MCF 10A (cell line): ENCODE measurements at regions of chr17 and their contacts with region 1.

Region 1: DNA sequence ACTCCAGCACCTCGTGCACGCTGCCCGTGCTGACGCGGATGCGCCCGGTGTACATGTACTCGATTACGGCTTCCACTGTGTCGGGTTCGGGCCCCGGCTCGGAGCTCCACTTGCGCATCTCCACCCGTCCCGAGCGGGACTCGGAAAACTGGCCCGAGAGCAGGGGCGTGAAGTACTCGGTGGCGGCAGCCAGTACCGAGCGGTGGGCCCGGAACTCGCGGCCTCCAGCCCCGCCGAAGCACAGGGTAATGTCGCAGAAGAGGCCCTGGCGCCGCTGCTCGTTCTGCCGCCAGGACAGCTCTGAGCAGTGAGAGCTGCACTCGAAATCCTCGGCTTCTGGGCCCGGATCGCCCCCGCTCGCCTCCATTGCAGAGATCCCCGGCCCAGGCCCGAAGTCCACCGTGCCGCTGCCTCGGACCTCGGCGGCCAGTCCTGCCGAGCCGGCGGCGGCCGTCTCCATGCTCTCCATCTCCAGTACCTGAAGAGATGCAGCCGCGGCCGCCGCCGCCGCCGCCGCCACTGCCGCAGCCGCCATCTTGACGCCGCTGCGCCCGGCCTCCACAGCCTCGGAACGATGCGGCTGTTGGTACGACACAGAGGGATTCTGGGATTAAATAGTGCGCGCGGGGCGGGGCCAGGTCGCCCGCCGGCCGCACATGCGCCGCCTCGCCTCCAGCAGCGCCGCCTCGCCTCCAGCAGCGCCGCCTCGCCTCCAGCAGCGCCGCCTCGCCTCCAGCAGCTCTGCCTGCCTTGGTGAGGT is at the start of gene KLHL11:
- DNase-seq: peak; percentile 89
- H3K4me3 Mint-ChIP-seq: no peak within 1 kb of the TSS
- H3K27ac Mint-ChIP-seq: no peak within 1 kb of the TSS
- H3K4me1 Mint-ChIP-seq: peaks cover 7% of the 10 kb centered on the region
- H3K27me3 Mint-ChIP-seq: no peaks in the 10 kb centered on the region
- CTCF ChIP-seq: no peak
- total RNA-seq, gene KLHL11: 19.1 and 22.3 TPM in 2 replicates

Region 2: GRCh38 chr17:41777574-41778188 is 87.3 kb before region 1 on chr17:
- CTCF ChIA-PET with region 1: no interaction called
- POLR2A ChIA-PET with region 1: interaction called, 13 read pairs
- intact Hi-C with region 1: no loop called
- DNase-seq: peak; percentile 92
- H3K4me3 Mint-ChIP-seq: no peak overlapping the region
- H3K27ac Mint-ChIP-seq: peak overlapping the region; percentile 71
- H3K4me1 Mint-ChIP-seq: peaks cover 33% of the 10 kb centered on the region
- H3K27me3 Mint-ChIP-seq: no peaks in the 10 kb centered on the region
- CTCF ChIP-seq: no peak

Region 3: GRCh38 chr17:41811549-41812380 is 53.3 kb before region 1 on chr17 and contains the start of gene P3H4:
- CTCF ChIA-PET with region 1: no interaction called
- POLR2A ChIA-PET with region 1: interaction called, 14 read pairs
- intact Hi-C with region 1: loop called (anchors 2 kb)
- DNase-seq: peak; percentile 74
- H3K4me3 Mint-ChIP-seq: peak within 1 kb of the TSS; percentile 95
- H3K27ac Mint-ChIP-seq: peak within 1 kb of the TSS; percentile 85
- H3K4me1 Mint-ChIP-seq: peaks cover 19% of the 10 kb centered on the region
- H3K27me3 Mint-ChIP-seq: no peaks in the 10 kb centered on the region
- CTCF ChIP-seq: peak; percentile 52
- total RNA-seq, gene P3H4: 36.4 and 41.5 TPM in 2 replicates

Region 4: GRCh38 chr17:41835800-41836549 is 29.0 kb before region 1 on chr17 and contains the start of gene NT5C3B:
- CTCF ChIA-PET with region 1: interaction called, 4 read pairs
- POLR2A ChIA-PET with region 1: interaction called, 26 read pairs
- intact Hi-C with region 1: no loop called
- DNase-seq: peak; percentile 32
- H3K4me3 Mint-ChIP-seq: peak within 1 kb of the TSS; percentile 75
- H3K27ac Mint-ChIP-seq: peak within 1 kb of the TSS; percentile 31
- H3K4me1 Mint-ChIP-seq: peaks cover 9% of the 10 kb centered on the region
- H3K27me3 Mint-ChIP-seq: no peaks in the 10 kb centered on the region
- CTCF ChIP-seq: no peak
- total RNA-seq, gene NT5C3B: 59.8 and 65.1 TPM in 2 replicates

Region 5: GRCh38 chr17:41848788-41849187 is 16.2 kb before region 1 on chr17:
- CTCF ChIA-PET with region 1: interaction called, 3 read pairs
- POLR2A ChIA-PET with region 1: interaction called, 35 read pairs
- intact Hi-C with region 1: no loop called
- DNase-seq: no peak
- H3K4me3 Mint-ChIP-seq: no peak overlapping the region
- H3K27ac Mint-ChIP-seq: no peak overlapping the region
- H3K4me1 Mint-ChIP-seq: no peaks in the 10 kb centered on the region
- H3K27me3 Mint-ChIP-seq: no peaks in the 10 kb centered on the region
- CTCF ChIP-seq: no peak

Region 6: DNA sequence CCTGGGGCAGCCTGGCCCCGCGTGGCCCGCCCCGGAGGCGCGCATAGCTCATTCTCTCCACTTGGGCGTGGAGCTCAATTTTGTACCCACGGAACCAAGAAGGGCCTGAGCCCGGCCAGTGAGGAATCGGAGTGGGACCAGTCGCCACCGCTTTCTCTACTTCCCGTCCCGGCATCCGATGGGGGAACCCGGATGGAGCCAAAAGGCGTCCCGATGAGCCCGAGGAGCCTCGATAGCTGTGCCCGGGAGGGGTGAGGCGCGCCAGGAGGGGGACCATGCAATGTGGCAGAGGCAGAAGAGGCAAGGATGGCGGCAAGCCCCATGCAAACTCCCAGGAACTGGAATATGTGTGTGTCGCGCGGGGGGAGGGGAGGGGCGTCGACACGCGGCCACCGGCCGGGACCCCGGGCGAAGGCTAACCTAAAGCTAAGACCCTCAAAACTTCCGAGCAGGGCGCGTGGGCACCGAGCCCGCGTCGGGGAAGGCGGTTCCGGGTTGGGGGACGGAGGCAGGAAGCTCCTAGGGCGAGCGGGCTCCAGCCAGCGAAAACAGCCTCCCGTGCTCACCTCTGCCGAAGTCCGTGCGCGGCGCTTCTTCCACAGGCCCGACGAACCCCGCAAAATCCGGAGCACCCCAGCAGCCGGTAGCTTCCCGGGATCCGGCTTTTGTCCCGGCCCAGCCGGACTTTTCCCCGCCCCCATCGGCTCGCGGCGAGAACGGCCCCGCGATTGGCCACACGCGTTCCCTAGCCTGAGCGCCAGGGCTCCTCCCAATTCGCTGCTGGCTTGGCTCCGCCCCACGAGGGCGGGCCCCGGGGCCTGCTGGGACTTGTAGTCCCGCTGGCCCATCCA is 53.5 kb after region 1 on chr17 and contains the start of gene ACLY:
- CTCF ChIA-PET with region 1: no interaction called
- POLR2A ChIA-PET with region 1: interaction called, 40 read pairs
- intact Hi-C with region 1: no loop called
- DNase-seq: peak; percentile 98
- H3K4me3 Mint-ChIP-seq: peak within 1 kb of the TSS; percentile 87
- H3K27ac Mint-ChIP-seq: peak within 1 kb of the TSS; percentile 78
- H3K4me1 Mint-ChIP-seq: peaks cover 30% of the 10 kb centered on the region
- H3K27me3 Mint-ChIP-seq: no peaks in the 10 kb centered on the region
- CTCF ChIP-seq: no peak
- total RNA-seq, gene ACLY: 67.7 and 67.9 TPM in 2 replicates